H1 (cell line): ENCODE measurements at regions of chr11 and their contacts with region 1.

Region 1: GRCh38 chr11:6315811-6316425 is 4.4 kb downstream of the CAVIN3 start:
- DNase-seq: peak in 1 of 2 experiments; percentile 65
- H3K4me3 ChIP-seq: no peak overlapping the region
- H3K27ac ChIP-seq: no peak overlapping the region
- H3K4me1 ChIP-seq: peaks cover 2 to 24% (median 16%) of the 10 kb centered on the region in 4 experiments
- H3K27me3 ChIP-seq: peaks cover 0 to 3% (median 1%) of the 10 kb centered on the region in 4 experiments; a peak in 1 of 7 replicates
- CTCF ChIP-seq: peak; percentile 92 to 97 (median 96)
- EP300 ChIP-seq: no peak
- POLR2A ChIP-seq: no peak
- RAD21 ChIP-seq: peak; percentile 92 to 95

Region 2: GRCh38 chr11:6022956-6023355 is 293.0 kb before region 1 on chr11:
- CTCF ChIA-PET with region 1: interaction called, 26 read pairs
- POLR2A ChIA-PET with region 1: no interaction called
- DNase-seq: no peak
- H3K4me3 ChIP-seq: no peak overlapping the region
- H3K27ac ChIP-seq: no peak overlapping the region
- H3K4me1 ChIP-seq: no peaks in the 10 kb centered on the region
- H3K27me3 ChIP-seq: no peaks in the 10 kb centered on the region
- CTCF ChIP-seq: peak in 2 of 3 experiments; percentile 70 to 81; a peak in 3 of 4 replicates
- EP300 ChIP-seq: no peak
- POLR2A ChIP-seq: no peak
- RAD21 ChIP-seq: peak; percentile 95 to 97

Region 3: DNA sequence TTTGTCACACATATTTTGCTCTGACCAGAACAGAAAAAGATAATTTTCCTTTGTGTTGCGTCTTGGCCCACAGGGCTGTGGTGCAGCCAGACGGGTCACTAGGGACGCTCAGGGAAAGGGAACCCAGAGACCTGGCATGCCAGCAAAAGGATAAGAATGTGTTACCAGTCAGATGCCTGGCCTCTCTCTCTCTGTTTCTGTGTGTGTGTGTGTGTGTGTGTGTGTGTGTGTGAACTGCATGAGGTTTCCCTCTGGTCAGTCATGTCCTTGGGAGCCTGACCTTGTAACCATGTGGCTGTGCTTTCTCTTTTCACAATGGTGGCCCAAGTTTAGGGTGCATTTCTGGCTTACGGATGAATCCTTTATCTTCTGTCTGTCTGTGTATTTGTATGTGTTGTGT is 30.9 kb before region 1 on chr11:
- CTCF ChIA-PET with region 1: interaction called, 36 read pairs
- POLR2A ChIA-PET with region 1: interaction called, 7 read pairs
- DNase-seq: no peak
- H3K4me3 ChIP-seq: no peak overlapping the region
- H3K27ac ChIP-seq: no peak overlapping the region
- H3K4me1 ChIP-seq: peaks cover 0 to 2% (median 0%) of the 10 kb centered on the region in 4 experiments; a peak in 2 of 7 replicates
- H3K27me3 ChIP-seq: peaks cover 12 to 75% (median 45%) of the 10 kb centered on the region in 4 experiments
- CTCF ChIP-seq: no peak
- EP300 ChIP-seq: no peak
- POLR2A ChIP-seq: no peak
- RAD21 ChIP-seq: no peak

Region 4: GRCh38 chr11:6333112-6333511 is 17.2 kb after region 1 on chr11:
- CTCF ChIA-PET with region 1: interaction called, 25 read pairs
- POLR2A ChIA-PET with region 1: interaction called, 4 read pairs
- DNase-seq: peak in 1 of 2 experiments; percentile 6
- H3K4me3 ChIP-seq: no peak overlapping the region
- H3K27ac ChIP-seq: no peak overlapping the region
- H3K4me1 ChIP-seq: peaks cover 0 to 4% (median 2%) of the 10 kb centered on the region in 4 experiments; a peak in 3 of 7 replicates
- H3K27me3 ChIP-seq: no peaks in the 10 kb centered on the region
- CTCF ChIP-seq: no peak
- EP300 ChIP-seq: no peak
- POLR2A ChIP-seq: no peak
- RAD21 ChIP-seq: no peak

Region 5: DNA sequence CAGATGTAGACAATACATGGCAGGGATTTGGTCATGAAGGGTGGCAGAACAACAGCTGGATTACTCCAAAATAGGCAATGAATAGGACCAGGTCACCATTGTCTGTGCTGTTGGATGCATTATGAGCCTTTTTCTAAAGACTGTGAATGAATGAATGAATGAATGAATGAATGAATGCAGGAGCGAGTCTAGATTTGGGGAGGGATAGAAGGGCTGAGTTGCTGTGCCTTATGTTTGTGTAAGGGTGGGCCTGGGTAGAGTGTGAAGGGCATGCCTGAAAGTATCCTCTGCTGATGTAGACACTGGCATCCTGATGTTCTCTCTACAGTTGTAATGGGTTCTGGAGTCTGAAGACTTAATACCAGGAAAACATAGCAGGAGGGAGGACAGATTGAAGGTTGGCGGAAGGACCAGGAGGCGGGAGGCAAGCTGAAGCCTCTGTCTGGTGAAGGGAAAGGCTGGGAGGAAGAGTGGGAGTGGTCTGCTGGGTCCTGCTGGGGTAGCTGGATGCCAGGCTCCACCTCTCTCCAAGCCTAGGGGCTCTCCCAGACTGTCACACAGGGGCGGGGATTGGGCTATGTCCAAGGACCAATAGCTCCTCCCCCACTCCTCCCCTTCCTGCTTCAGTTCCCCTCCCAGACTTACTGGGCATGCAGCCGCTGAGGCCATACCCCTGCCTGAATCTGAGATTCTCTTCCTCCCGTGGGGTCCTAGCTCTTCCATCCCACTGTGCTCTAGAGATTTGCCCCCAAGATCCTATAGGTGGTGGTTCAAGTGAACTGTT is 153.0 kb after region 1 on chr11:
- CTCF ChIA-PET with region 1: no interaction called
- POLR2A ChIA-PET with region 1: no interaction called
- DNase-seq: peak; percentile 88
- H3K4me3 ChIP-seq: peak overlapping the region in 1 of 4 experiments; percentile 23; a peak in 1 of 8 replicates
- H3K27ac ChIP-seq: no peak overlapping the region; the same call in 1 of the 2 replicates
- H3K4me1 ChIP-seq: peaks cover 5 to 10% (median 7%) of the 10 kb centered on the region in 4 experiments
- H3K27me3 ChIP-seq: no peaks in the 10 kb centered on the region; a peak in 1 of 7 replicates
- CTCF ChIP-seq: no peak
- EP300 ChIP-seq: no peak
- POLR2A ChIP-seq: peak in 1 of 2 experiments; percentile 88; a peak in 2 of 3 replicates
- RAD21 ChIP-seq: no peak; a peak in 1 of 4 replicates